ENCODE measurements at regions of chr7 and their contacts with region 1.

Region 1: GRCh38 chr7:73451780-73452398 is 18.3 kb downstream of the FZD9 start:
- DNase-seq: peak; percentile 35
- H3K4me3 Mint-ChIP-seq: no peak overlapping the region
- H3K27ac Mint-ChIP-seq: no peak overlapping the region
- H3K4me1 Mint-ChIP-seq: no peaks in the 10 kb centered on the region
- H3K27me3 Mint-ChIP-seq: no peaks in the 10 kb centered on the region

Region 2: DNA sequence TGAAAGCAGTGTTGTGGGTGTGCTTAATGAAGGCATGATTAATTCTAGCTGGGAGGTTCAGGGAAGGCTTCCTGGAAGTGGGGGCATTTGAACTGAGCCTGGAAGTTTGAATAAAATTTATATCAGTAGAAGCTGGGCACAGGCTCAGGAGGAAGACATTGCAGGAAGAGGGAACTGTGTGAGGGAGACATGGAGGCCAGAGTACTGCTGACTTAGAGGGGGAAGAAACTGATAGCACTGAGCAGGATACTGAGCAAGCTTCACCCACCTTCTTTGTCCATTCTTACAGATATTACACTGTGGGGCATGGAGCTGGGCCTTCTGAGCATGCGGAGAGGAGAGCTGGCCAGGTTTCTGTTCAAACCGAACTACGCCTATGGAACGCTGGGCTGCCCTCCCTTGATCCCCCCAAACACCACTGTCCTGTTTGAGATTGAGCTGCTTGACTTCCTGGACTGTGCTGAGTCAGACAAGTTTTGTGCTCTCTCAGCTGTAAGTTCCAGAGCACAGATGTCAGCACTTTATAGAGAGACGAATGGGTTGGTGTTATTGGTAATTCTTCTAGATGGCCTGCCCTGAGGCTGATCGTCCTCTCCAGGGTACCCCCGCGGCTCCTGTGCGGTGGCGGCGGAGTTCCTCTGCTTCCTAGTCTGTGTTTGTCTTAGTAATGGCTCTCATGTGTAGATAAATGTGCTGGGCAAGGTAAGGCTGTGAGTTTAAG is 121.9 kb before region 1 on chr7:
- CTCF ChIA-PET with region 1: interaction called, 17 read pairs
- intact Hi-C with region 1: no loop called
- DNase-seq: no peak
- H3K4me3 Mint-ChIP-seq: no peak overlapping the region
- H3K27ac Mint-ChIP-seq: no peak overlapping the region
- H3K4me1 Mint-ChIP-seq: no peaks in the 10 kb centered on the region
- H3K27me3 Mint-ChIP-seq: no peaks in the 10 kb centered on the region

Measured in activated naive CD4-positive, alpha-beta T cell treated with anti-CD3 and anti-CD28 coated beads for 36 hours (primary cell).